Right ventricle myocardium superior (tissue), 1 donor: ENCODE measurements at regions of chr3 and their contacts with region 1.

Region 1: DNA sequence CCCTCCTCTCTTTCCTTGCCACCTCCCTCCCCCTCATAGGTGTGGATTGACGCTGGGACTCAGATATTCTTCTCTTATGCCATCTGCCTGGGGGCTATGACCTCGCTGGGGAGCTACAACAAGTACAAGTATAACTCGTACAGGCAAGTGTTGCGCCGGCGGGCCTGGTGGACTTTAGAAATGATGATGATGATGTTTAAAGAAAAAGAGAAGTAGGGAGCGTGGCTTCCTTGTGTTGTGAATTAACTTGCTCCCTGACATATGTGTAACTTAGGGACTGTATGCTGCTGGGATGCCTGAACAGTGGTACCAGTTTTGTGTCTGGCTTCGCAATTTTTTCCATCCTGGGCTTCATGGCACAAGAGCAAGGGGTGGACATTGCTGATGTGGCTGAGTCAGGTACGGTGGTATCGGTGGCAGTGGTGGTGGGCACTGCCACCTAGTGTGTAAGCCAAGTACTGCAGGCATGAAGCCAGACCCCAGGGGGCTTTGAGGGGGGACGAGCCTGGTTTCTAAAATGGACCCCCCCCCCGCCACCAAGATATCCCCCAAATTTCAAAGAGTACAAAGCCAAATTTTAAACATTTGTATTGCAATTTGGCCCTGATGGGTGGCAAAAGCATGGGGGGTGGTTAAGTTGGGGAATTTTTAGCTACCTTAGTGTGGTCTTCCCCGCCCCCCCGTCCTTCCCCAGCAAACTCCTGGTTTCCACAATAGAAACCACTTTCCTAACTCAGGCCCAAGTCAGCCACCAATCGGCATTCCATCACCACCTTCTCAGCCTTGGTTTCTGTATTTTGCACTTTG is 65.6 kb downstream of the SLC6A6 start:
- DNase-seq: no peak
- ATAC-seq: peak; percentile 79

Region 2: DNA sequence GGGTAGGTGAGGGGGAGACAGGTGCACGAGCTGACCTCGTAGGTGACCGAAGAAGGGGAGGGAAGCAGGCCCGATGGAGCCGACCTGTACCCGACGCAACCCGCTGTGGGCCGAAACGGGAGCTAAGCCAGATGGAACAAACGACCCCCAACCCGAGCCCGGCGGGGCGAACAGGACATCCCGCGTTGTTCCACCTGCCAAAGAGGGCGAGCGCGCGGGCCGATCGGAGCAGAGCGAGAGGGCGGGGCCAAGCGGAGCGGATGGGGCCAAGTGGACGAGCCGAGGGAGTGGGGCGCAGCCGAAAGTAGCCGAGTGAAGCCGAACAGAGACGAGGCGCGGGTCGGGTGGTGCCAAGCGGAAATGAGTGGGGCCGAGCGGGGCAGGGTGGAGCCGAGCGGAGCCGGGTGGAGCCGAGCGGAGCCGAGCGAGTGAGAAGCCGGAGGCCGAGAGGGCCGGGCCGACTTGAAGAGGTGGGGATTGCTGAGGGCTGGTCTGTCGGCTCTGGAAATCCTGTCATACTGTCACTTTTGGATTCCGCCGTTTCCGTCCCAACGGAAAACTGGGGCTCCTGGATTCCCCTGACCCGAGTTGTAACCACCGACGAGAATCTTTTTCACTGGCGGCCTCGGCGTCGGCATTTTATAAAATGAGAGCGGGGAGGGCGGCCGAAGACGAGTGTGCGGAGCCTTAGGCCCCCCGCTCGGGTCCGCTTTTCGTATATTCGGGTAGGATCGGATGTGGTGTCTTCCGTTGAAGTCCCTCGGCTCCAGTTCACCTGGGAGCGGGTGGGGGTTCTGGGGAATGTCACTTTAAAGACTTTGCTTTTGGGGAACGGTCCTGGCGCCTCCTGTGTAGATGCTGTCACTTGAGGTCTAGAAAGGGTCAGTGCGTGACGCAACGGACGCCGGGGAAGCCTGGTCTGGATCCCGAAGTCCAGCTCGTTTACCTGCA is 572.6 kb before region 1 on chr3:
- intact Hi-C with region 1: loop called (anchors 5 kb)
- DNase-seq: peak; percentile 97
- ATAC-seq: peak; percentile 99

Region 3: DNA sequence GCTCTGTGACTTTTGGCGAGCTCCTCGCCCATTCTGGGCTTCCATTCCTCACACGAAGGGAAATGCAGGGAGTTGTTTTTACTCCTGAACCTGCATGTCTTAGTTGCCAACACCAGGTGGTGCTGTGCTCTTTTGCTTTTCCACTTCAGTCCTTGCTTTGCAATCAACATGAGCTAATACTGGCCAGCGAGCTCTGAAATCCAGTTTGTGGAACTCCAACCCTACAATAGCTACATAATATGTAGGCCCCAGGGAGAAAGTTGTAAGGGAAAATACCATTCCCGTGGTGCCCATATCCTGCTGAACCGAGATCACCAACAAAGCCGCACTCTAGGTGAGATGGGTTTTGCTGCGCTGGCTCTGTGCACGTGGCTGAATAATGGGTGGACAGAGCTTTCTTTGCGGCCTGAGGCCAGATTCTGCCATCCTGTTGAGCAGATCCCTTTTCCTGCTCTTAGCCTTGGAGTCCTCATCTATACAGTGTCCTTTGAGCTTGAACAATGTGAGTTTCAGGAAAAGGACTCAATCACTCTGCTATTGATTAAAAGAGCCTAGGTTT is 264.4 kb before region 1 on chr3:
- intact Hi-C with region 1: loop called (anchors 2 kb)
- DNase-seq: peak; percentile 48
- ATAC-seq: peak; percentile 83

Region 4: DNA sequence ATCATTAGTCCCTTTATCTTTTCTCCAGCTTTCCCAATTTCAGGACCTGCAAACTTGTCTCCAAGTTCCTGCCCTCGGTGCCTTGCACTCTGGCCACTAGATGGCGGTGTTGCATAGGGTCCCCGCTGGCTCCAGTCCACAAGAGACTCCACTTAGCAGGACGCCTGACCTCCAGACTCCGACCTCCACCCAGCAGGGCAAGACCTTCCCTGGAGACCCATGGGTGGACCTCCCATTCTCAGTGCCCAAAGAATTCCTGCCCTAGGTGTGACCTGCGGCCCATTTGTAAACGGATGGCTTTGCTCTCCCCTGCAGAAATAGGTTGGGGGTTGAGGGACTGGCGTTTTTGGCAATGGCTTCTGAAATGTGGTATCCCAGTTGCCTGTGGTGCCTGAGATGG is 206.8 kb before region 1 on chr3:
- intact Hi-C with region 1: loop called (anchors 2 kb)
- DNase-seq: peak; percentile 89
- ATAC-seq: peak; percentile 92

Region 5: DNA sequence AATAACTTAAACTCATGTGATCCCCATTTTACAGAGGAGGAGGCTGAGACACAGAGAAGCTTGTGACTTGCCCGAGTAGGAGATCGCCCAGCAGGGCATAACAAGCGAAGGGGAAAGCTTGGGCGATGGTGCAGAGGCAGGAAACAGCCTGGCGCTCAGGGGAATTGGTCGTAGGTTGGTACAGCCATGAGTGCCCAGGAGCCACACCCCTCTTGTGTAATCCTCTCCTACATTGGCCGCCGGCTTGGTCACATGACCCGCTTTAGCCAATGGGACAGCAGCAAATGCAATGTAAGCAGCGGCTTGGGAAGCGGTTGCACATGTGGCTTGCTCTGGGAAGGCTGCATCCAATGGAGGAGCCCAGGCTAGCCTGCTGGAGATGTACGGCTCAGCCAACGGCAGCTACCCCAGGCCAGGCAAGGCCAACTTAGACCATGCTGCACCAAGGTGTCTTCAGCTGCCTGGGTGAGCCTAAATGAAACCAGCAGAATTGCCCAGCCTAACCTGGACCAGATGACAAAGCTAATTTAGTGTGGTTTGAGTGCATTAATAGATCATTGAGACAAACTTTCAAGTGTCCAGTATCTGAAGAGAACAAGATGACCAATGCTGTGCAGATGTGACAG is 115.9 kb before region 1 on chr3:
- intact Hi-C with region 1: no loop called
- DNase-seq: no peak
- ATAC-seq: no peak